ENCODE measurements at regions of chr18 and their contacts with region 1.

Region 1: DNA sequence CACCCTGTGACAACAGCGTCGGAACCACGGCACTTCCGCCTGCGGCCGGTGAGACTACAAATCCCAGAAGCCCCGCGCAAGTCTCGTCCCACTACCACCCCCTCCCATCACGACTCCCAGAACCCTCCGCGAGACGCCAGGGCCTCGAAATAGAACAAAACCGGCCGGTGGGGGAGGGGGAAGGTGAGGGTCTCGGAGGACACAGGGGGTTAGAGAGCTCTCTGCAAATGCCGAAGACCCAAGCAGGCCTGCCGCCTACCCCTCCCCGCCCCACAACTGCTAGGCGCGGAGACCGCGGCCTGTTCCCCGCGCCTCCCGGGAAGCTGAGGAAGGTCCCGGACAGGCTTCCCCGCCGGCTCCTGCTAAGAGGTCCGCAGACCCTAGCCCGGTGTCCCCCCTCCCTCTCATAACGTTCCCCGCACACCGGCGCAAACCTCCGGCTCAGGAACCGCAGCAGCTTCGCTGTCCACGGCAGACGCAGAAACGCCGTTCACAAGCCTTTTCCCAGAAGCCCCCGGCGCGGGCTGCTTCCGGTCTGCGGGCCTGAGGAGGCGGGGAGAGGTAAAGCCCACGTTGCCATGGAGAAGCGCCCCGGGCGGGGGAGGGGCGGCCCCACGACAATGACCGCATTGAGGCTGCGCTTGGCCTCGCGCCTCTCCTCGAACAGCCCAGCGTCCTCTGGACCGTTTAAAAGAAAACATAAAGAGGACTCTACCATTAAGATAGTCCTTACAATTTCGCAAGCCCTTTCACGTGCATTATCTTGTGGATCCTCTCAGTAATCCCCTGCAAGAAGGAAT is at the start of gene ZNF24:
- DNase-seq: peak; percentile 97 to 98 (median 97)
- ATAC-seq: peak; percentile 98
- H3K4me3 ChIP-seq: peak within 1 kb of the TSS; percentile 95
- H3K4me1 ChIP-seq: peaks cover 18% of the 10 kb centered on the region
- CTCF ChIP-seq: no peak
- total RNA-seq, gene ZNF24: 44.1 to 58.3 (median 48.9) TPM

Region 2: DNA sequence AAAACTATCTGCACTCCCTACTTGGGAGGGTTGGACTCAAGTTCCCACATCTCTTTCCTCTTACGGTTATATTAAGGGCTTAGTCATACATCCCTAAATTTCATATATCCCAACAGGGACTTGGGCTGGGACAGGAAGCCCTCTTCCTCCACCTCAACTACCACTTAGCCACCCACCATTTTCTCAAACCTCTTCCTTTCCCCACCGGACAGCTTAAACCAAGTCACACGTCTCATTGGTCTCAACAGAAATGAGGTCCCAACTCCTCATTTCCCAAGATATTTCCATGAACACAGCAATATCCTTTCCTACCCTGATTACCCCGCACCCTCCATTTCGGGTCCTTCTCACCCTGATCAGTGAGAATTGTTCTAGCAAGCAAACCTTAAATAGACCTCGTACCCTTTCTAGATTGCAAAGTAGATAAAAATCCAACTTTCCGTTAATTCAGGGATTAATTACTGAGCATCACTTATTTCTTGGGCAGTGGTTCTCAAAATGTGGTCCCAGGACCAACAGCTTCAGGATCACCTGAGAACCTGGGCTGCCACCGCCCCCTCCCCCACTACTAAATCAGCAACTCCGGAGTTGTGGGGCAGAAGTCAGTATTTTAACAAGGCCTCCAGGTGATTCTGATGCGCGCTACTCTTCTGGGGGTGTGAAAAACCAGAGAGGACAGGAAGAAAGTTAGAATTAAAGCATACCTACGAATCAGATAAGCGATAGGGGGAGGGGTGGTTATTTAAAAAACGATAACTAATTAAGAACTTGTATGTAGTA is 54.7 kb before region 1 on chr18:
- intact Hi-C with region 1: loop called in 1 of 2 experiments (anchors 2 kb)
- DNase-seq: peak in 2 of 3 donors; percentile 48 to 55
- ATAC-seq: peak; percentile 52
- H3K4me3 ChIP-seq: peak overlapping the region; percentile 50
- H3K4me1 ChIP-seq: peaks cover 7% of the 10 kb centered on the region
- CTCF ChIP-seq: no peak

Region 3: GRCh38 chr18:35432565-35433001 is 88.4 kb after region 1 on chr18:
- intact Hi-C with region 1: no loop called
- DNase-seq: no peak
- ATAC-seq: no peak
- H3K4me3 ChIP-seq: no peak overlapping the region
- H3K4me1 ChIP-seq: no peaks in the 10 kb centered on the region
- CTCF ChIP-seq: no peak

Measured in mucosa of descending colon (tissue), 3 donors.